ENCODE measurements at regions of chrX and their contacts with region 1.

Region 1: DNA sequence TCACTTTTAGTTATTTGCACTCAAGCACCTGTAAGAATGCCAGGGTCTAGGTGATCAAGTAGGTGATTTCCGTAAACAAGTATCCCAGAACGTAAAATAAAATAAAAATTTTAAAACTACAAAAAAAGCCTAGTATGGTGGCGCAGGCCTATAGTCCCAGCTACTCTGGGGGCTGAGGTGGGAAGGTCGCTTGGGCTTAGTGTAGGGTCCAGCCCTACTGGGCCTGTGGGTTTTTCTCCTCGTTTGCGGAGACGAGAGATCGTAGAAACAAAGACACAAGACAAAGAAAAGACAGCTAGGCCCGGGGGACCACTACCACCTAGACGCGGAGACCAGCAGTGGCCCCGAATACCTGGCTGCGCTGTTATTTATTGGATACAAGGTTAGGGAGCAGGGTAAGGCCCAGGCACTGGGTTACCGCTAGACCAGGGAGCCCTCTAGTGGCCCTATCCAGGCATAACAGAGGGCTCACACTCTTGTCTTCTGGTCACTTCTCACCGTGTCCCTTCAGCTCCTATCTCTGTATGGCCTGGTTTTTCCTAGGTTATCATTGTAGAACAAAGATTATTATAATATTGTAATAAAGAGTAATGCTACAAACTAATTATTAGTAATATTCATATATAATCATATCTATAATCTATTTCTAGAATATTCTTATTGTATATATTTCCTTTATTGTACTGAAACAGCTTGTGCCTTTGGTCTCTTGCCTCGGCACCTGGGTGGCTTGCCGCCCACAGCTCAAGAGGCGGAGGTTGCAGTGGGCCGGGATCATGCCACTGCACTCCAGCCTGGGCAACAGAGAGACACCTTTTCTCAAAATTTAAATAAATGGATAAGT is 38.4 kb downstream of the SAGE1 start:
- DNase-seq: peak; percentile 10 to 74 (median 48)
- ATAC-seq: peak; percentile 97
- H3K4me3 ChIP-seq: no peak overlapping the region
- H3K27ac ChIP-seq: no peak overlapping the region
- H3K4me1 ChIP-seq: no peaks in the 10 kb centered on the region
- H3K27me3 ChIP-seq: no peaks in the 10 kb centered on the region; a peak in 2 of 5 replicates
- CTCF ChIP-seq: peak; percentile 71 to 77 (median 73)
- EP300 ChIP-seq: no peak
- POLR2A ChIP-seq: no peak
- RAD21 ChIP-seq: peak; percentile 78 to 85

Region 2: DNA sequence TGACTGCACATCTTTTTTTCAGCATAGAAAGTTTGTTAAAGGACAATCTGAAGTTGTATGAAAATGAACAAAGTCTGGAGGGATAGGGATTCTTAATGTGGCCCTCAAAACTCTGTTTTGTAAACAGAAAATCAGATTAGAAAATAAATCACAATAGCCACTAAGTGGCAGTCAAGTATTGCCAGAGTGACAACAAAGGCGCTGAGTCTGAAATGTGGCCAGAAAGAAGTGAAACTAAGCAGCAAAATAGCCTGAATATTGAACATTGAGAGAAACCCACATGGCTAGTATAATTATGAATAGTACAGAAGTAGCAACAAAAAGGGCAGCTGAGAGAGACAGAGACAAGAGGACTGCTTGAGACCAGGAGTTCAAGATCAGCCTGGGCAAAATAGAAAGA is 299.5 kb before region 1 on chrX:
- CTCF ChIA-PET with region 1: no interaction called
- POLR2A ChIA-PET with region 1: no interaction called
- in situ Hi-C with region 1: no loop called
- intact Hi-C with region 1: loop called (anchors 10 kb)
- DNase-seq: no peak
- ATAC-seq: no peak
- H3K4me3 ChIP-seq: no peak overlapping the region
- H3K27ac ChIP-seq: no peak overlapping the region
- H3K4me1 ChIP-seq: no peaks in the 10 kb centered on the region
- H3K27me3 ChIP-seq: no peaks in the 10 kb centered on the region
- CTCF ChIP-seq: peak in 2 of 3 experiments; percentile 12 to 33; a peak in 3 of 6 replicates
- EP300 ChIP-seq: no peak
- POLR2A ChIP-seq: no peak
- RAD21 ChIP-seq: peak in 1 of 2 experiments; percentile 29; a peak in 1 of 4 replicates

Region 3: DNA sequence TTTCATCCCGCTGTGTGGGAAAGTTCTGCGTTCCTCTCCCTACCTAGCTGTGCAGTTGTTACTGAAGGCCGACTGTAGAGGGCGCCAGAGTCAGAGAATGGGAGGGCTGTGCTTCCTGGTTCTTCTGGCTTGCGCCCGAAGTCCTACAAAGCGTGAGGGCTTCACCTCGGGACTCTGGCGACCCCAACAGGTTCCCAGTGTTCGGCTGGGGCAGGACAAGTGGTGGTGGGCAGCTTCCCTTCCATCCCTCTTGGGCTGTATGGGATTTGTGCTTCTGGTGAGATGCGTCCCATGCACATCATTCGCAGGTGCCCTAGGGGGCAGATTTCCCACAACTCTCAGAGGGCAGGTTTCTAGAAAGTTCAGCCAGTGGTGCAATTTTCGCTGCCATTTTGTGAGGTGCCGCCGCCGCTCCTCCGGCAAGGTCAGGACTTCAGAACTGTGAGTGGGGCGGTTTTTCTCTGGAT is 191.2 kb before region 1 on chrX:
- CTCF ChIA-PET with region 1: interaction called, 3 read pairs
- POLR2A ChIA-PET with region 1: no interaction called
- in situ Hi-C with region 1: loop called (anchors 25 kb)
- intact Hi-C with region 1: loop called (anchors 1 kb)
- DNase-seq: peak; percentile 67 to 83 (median 70)
- ATAC-seq: peak; percentile 93
- H3K4me3 ChIP-seq: peak overlapping the region; percentile 40
- H3K27ac ChIP-seq: peak overlapping the region; percentile 42; the same call in 2 of the 3 replicates
- H3K4me1 ChIP-seq: no peaks in the 10 kb centered on the region; a peak in 1 of 5 replicates
- H3K27me3 ChIP-seq: no peaks in the 10 kb centered on the region
- CTCF ChIP-seq: peak; percentile 71 to 91 (median 88)
- EP300 ChIP-seq: no peak
- POLR2A ChIP-seq: 0 out of 2 replicates have a peak, but pooled peaks have one; percentile 39
- RAD21 ChIP-seq: peak; percentile 60 to 73

Measured in K562 (cell line).